ENCODE measurements at regions of chr4 and their contacts with region 1.

Region 1: DNA sequence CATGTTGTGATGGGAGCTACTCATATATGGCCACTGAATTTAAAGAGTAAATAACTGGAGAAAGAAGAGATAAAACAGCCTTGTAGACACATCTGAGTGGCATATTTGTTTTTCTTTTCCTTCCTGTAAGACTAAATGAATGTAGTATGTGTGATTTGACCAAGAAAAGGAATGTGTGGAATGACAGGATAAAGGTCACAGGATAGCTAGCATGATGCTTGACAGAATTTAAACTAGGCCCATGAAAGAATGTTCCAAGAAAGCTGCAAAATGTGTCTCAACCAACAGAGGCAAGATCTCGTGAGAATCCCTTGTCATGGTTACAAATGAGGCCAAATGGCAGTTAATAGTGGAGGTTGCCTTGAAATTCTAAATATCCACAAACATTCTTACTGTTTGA is 137.0 kb downstream of the KCNIP4 start:
- DNase-seq: no peak
- ATAC-seq: no peak
- H3K4me3 Mint-ChIP-seq: no peak overlapping the region
- H3K27ac Mint-ChIP-seq: no peak overlapping the region
- H3K4me1 Mint-ChIP-seq: no peaks in the 10 kb centered on the region
- H3K27me3 Mint-ChIP-seq: no peaks in the 10 kb centered on the region

Region 2: GRCh38 chr4:22029807-22030206 is 218.2 kb after region 1 on chr4:
- CTCF ChIA-PET with region 1: no interaction called
- POLR2A ChIA-PET with region 1: no interaction called
- intact Hi-C with region 1: loop called in 1 of 2 experiments (anchors 5 kb)
- DNase-seq: no peak
- ATAC-seq: no peak
- H3K4me3 Mint-ChIP-seq: no peak overlapping the region
- H3K27ac Mint-ChIP-seq: no peak overlapping the region
- H3K4me1 Mint-ChIP-seq: no peaks in the 10 kb centered on the region
- H3K27me3 Mint-ChIP-seq: no peaks in the 10 kb centered on the region